Cardiac septum (tissue), 1 donor: ENCODE measurements at regions of chr3 and their contacts with region 1.

Region 1: DNA sequence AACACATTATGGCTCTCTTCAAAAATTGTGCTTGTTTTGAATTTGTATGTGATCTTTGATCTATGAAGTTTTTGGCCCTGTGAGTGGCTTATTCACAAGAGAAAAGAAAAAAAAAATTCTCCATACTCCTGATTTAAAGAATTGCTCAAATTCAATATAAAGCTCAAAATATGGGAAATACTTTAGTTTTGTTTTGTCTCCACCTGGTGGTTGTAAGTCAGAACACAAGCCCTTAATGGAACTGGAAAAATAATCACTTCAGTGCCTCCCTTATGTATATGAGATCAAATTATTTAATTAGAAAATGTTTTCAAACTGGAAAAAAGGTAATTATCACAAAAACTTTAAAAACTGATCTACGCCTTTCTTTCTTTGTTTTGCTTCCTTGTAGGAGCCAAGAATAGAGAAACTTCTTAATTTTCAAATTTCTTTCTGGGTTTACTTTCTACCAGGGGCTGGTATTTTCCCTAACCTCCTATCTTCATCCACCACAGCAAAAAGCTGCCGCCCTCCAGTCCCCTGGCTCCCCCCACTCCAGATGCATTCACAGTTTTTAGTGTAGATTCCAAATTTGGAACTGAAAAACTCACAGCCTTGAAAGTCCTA is 50.6 kb downstream of the SERP1 start:
- DNase-seq: no peak

Region 2: GRCh38 chr3:149936812-149937233 is 558.8 kb before region 1 on chr3:
- intact Hi-C with region 1: loop called (anchors 10 kb)
- DNase-seq: no peak

Region 3: GRCh38 chr3:150227839-150228238 is 267.8 kb before region 1 on chr3:
- intact Hi-C with region 1: loop called (anchors 5 kb)
- DNase-seq: no peak

Region 4: GRCh38 chr3:150286390-150287147 is 209.1 kb before region 1 on chr3:
- intact Hi-C with region 1: loop called (anchors 2 kb)
- DNase-seq: no peak